Endothelial cell of umbilical vein (primary cell): ENCODE measurements at regions of chr2 and their contacts with region 1.

Region 1: GRCh38 chr2:203683932-203684556 is 22.4 kb upstream of the CD28 start:
- DNase-seq: peak; percentile 90
- H3K4me3 ChIP-seq: no peak overlapping the region
- H3K27ac ChIP-seq: peak overlapping the region; percentile 98
- H3K4me1 ChIP-seq: peaks cover 52% of the 10 kb centered on the region
- H3K27me3 ChIP-seq: no peaks in the 10 kb centered on the region
- CTCF ChIP-seq: no peak
- POLR2A ChIP-seq: no peak

Region 2: GRCh38 chr2:202634556-202635427 is 1049.3 kb before region 1 on chr2 and contains the start of gene FAM117B:
- CTCF ChIA-PET with region 1: no interaction called
- POLR2A ChIA-PET with region 1: no interaction called
- dilution Hi-C with region 1: no loop called
- intact Hi-C with region 1: loop called (anchors 10 kb)
- DNase-seq: peak; percentile 96
- H3K4me3 ChIP-seq: peak within 1 kb of the TSS; percentile 65 to 85 (median 70)
- H3K27ac ChIP-seq: peak within 1 kb of the TSS; percentile 34
- H3K4me1 ChIP-seq: peaks cover 17% of the 10 kb centered on the region
- H3K27me3 ChIP-seq: no peaks in the 10 kb centered on the region
- CTCF ChIP-seq: peak in 1 of 2 donors; percentile 6
- POLR2A ChIP-seq: no peak
- total RNA-seq, gene FAM117B: 5.7 and 7.0 TPM in 2 replicates

Region 3: GRCh38 chr2:203327901-203328759 is 355.9 kb before region 1 on chr2 and contains the start of gene ABI2:
- CTCF ChIA-PET with region 1: no interaction called
- POLR2A ChIA-PET with region 1: no interaction called
- dilution Hi-C with region 1: no loop called
- intact Hi-C with region 1: loop called (anchors 10 kb)
- DNase-seq: peak; percentile 81
- H3K4me3 ChIP-seq: peak within 1 kb of the TSS; percentile 97 to 100 (median 99)
- H3K27ac ChIP-seq: peak within 1 kb of the TSS; percentile 79
- H3K4me1 ChIP-seq: peaks cover 19% of the 10 kb centered on the region
- H3K27me3 ChIP-seq: no peaks in the 10 kb centered on the region
- CTCF ChIP-seq: no peak
- POLR2A ChIP-seq: peak; percentile 81
- total RNA-seq, gene ABI2: 61.0 and 74.4 TPM in 2 replicates

Region 4: DNA sequence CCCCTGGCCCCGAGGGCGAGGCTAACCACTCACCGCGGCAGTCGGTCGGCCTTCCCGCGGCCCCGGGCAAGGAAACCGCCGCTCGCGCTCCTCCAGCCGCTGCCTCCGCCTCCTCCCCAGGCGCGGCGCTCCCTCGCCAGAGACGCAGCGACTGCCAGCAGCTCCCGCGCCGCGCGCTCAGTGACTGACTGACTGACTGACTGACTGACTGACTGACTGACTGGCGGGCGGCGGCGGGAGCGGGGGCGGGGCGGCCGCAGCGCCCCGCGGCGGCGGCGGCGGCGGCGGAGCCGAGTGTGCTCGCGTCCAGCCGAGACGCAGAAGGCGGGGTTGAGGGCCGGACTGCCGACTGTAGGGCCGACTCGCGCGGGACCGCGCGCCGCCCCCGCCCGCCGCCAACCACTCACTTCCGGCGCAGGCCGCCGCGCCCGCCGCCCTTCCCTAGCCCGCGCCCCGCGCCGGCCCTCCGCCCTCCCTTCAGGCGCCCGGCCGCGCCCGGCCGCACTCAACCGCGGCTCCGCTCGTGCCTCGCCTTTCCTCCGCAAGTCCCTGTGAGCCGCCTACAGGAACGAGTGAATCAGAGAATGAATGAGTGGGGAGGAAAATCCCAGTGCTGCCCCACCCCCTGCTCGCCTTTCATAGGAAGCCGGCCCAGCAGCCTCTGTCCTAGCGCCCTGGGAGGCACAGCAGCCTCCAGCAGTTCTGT is 148.8 kb before region 1 on chr2 and contains the start of gene RAPH1:
- CTCF ChIA-PET with region 1: no interaction called
- POLR2A ChIA-PET with region 1: interaction called, 4 read pairs
- dilution Hi-C with region 1: no loop called
- intact Hi-C with region 1: loop called (anchors 1 kb)
- DNase-seq: peak; percentile 85
- H3K4me3 ChIP-seq: peak within 1 kb of the TSS; percentile 93 to 100 (median 98)
- H3K27ac ChIP-seq: peak within 1 kb of the TSS; percentile 81
- H3K4me1 ChIP-seq: peaks cover 18% of the 10 kb centered on the region
- H3K27me3 ChIP-seq: no peaks in the 10 kb centered on the region
- CTCF ChIP-seq: no peak
- POLR2A ChIP-seq: peak; percentile 86
- total RNA-seq, gene RAPH1: 56.9 and 59.5 TPM in 2 replicates

Region 5: DNA sequence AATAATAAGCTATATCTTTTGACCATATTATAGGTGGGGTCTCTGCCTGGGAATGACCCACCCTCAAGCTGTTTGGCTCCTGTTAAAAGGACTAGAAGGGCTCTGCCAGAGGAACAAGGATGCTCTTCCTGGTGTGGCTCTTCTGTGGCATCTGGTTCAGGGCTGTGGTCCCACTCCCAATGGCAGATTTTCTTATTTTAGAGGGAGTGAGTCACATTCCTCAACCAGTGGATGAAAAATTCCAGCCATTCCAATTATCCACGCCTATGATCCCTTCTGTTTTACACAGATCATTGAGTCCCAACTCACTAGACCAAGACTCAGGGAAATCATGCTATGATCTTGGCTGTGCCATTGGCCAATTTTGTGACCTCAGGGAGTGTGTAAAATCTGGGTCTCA is 981.2 kb after region 1 on chr2:
- CTCF ChIA-PET with region 1: no interaction called
- POLR2A ChIA-PET with region 1: no interaction called
- dilution Hi-C with region 1: no loop called
- intact Hi-C with region 1: loop called (anchors 10 kb)
- DNase-seq: no peak
- H3K4me3 ChIP-seq: no peak overlapping the region
- H3K27ac ChIP-seq: peak overlapping the region; percentile 92
- H3K4me1 ChIP-seq: peaks cover 45% of the 10 kb centered on the region
- H3K27me3 ChIP-seq: no peaks in the 10 kb centered on the region
- CTCF ChIP-seq: no peak
- POLR2A ChIP-seq: no peak